Activated CD4-positive, alpha-beta T cell treated with anti-CD3 and anti-CD28 coated beads, Interleukin-2, amount 10 ng/mL, durations not matched to agents 24 days and 14 days (primary cell): ENCODE measurements at regions of chr5 and their contacts with region 1.

Region 1: DNA sequence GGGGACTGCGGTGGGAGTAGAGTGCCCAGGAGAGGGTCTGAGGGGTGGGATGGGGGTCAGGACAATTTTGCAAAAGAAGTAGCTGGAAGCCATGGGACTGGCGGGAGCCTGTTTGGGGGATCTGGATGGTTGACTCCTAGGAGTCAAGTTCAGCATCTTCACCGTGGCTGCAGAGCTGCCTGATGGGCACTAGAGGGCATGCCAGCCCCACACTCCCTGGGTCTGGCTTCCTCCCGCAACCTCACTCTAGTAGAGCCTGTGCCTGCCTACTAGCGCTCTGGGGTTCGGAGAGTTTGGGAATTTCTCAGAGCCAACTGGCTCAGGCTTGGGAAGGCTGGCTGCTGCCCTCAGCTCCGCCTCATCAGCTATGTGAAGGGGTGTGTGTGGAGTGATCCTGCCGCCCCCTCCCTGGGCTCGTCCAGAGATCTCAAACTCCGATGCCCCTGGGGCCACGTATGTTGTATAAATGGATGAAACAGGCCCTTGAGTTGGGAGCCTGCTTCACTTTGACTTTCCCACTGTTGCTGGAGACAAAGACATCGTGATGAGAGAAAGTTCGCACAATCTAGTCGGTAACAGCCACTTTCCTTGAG is 10.8 kb downstream of the TSPAN17 start:
- DNase-seq: peak; percentile 90
- H3K4me3 Mint-ChIP-seq: peak overlapping the region; percentile 77
- H3K27ac Mint-ChIP-seq: no peak overlapping the region
- H3K4me1 Mint-ChIP-seq: peaks cover 38% of the 10 kb centered on the region
- H3K27me3 Mint-ChIP-seq: peaks cover 4% of the 10 kb centered on the region

Region 2: DNA sequence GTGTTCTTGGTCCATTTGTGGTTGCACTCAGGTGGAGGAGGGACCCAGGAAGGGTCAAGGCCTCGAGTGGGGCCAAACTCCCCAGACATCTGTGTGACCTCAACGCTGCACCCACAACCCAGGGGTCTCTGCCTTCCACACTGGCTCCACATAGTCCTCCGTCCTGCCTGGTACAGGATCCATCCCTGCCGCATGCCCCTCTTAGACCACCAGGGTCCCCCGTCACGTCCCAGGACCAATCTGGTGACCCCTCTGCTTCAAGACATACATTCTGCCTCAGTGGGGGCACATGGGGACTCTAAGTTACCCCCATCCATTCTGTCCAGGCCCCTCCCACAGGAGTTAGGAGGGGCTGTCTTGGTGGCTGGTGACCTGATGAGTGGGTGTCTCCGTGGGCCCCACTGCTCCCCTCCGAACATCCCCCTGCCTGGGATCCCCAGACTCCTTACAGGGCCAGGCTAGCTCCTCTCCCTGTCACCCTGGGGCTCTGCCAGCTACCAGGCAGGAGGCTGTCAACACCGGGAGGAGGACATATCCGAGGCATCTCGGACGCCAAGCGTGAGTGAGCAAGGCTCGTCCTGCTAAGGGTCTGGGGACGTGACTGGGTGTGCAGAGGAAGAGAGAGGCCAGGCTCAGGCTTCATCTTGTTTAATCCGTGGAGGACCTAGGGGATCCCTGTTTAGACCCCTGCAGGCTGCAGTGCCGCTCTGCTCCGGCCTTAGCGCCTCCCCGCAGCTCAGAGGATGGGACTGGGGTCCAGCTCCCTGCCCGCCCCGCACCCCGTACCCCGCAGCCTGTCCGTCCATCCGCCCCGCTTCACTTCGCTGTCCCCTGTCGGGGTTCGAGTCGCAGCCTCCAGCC is 21.5 kb after region 1 on chr5:
- intact Hi-C with region 1: no loop called
- DNase-seq: no peak
- H3K4me3 Mint-ChIP-seq: no peak overlapping the region
- H3K27ac Mint-ChIP-seq: no peak overlapping the region
- H3K4me1 Mint-ChIP-seq: no peaks in the 10 kb centered on the region
- H3K27me3 Mint-ChIP-seq: peaks cover 46% of the 10 kb centered on the region

Region 3: GRCh38 chr5:176817841-176818377 is 159.8 kb after region 1 on chr5:
- intact Hi-C with region 1: loop called (anchors 10 kb)
- DNase-seq: no peak
- H3K4me3 Mint-ChIP-seq: peak overlapping the region; percentile 50
- H3K27ac Mint-ChIP-seq: no peak overlapping the region
- H3K4me1 Mint-ChIP-seq: peaks cover 9% of the 10 kb centered on the region
- H3K27me3 Mint-ChIP-seq: peaks cover 59% of the 10 kb centered on the region

Region 4: DNA sequence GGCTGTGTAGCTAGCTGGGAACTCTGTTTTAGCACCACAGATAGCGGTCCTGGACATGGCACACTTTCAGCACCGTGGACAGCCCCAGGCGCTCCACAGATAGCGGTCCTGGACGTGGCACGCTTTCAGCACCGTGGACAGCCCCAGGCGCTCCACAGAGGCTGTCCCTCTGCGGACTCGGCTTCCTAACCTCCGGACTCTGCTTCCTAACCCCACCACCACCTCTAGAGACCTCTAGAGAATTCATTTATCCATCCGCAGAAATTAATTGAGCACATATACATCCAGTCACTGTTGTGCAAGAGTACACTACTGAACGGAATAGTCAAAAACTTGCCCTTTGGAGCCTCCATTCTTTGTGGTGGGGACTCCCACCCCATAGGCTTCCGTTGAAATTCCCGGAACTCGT is 179.6 kb after region 1 on chr5:
- intact Hi-C with region 1: no loop called
- DNase-seq: peak; percentile 94
- H3K4me3 Mint-ChIP-seq: no peak overlapping the region
- H3K27ac Mint-ChIP-seq: no peak overlapping the region
- H3K4me1 Mint-ChIP-seq: no peaks in the 10 kb centered on the region
- H3K27me3 Mint-ChIP-seq: peaks cover 2% of the 10 kb centered on the region

Region 5: GRCh38 chr5:176959051-176959450 is 300.9 kb after region 1 on chr5:
- intact Hi-C with region 1: loop called (anchors 2 kb)
- DNase-seq: no peak
- H3K4me3 Mint-ChIP-seq: no peak overlapping the region
- H3K27ac Mint-ChIP-seq: no peak overlapping the region
- H3K4me1 Mint-ChIP-seq: peaks cover 4% of the 10 kb centered on the region
- H3K27me3 Mint-ChIP-seq: no peaks in the 10 kb centered on the region